Thyroid gland (tissue), 4 donors: ENCODE measurements at regions of chr7 and their contacts with region 1.

Region 1: DNA sequence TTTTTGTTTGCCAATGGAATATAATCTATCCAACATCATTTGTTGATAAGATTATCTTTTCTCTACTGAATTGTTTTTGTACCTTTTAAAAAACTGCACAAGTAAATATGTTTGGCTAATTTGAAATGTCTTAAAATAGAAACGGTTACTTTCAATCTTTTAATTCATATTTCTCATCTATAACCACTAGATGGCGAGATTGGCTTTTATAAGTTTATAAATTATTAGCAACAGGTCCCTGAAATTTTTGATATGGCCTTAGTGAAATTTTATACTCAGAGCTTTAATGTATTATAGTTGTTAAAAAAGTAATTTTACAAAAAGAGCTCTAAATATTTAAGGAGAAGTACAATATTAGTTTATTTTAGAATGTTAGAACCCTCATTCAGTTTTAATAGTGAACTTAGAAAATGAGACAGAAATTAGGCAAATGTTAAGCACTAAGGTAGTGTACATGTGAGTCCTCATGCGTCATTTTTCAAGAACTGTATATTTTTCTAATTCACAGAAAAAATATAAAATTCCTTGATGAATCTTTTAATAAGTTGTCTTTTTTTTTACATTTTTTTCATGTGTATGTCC is 592.5 kb downstream of the ARL4A start:
- DNase-seq: no peak
- H3K4me3 ChIP-seq: no peak overlapping the region
- H3K27ac ChIP-seq: no peak overlapping the region
- H3K4me1 ChIP-seq: no peaks in the 10 kb centered on the region
- H3K27me3 ChIP-seq: no peaks in the 10 kb centered on the region
- CTCF ChIP-seq: peak in 4 of 6 experiments; percentile 33 to 64 (median 54)
- POLR2A ChIP-seq: no peak

Region 2: DNA sequence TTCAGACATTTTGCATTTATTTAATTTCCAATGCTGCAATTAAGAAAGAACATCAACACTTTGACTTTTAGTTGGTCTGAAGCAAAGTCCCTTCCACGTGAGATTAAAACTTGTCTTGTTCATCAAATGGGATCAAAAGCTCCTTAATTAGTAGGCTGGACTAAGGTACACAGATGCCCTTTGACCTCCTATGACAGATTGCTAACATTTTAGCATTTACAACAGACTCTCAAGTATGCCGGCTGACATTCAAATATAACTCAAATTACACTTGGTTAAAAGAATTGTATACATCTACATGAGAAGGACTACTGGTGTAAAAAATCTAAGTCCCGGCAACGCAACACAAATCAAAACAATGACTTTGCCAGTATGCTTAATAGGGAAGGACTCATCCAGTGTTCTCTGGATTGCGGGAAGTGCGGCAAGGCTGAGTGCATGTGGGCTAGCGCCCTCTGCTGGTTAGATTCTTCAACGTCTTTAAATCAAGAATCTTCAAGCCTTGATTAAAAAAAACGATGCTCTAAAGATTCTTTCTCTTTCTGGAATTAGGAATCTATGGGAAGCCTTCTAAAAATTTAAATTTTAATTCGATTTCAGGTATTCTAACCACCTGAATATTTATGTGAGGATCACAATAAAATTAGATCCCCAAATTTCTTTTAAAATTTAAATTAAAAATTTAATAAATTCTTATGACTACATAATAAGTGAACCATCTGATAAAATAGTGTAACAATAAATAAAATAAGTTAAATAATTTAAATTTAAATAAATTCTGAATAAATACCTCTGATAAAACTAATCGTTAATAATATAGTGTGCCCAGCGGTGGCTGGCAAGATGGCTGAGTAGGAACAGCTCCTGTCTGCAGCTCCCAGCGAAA is 1177.9 kb after region 1 on chr7:
- intact Hi-C with region 1: loop called (anchors 10 kb)
- DNase-seq: peak; percentile 62 to 75
- H3K4me3 ChIP-seq: no peak overlapping the region
- H3K27ac ChIP-seq: no peak overlapping the region
- H3K4me1 ChIP-seq: no peaks in the 10 kb centered on the region
- H3K27me3 ChIP-seq: no peaks in the 10 kb centered on the region
- CTCF ChIP-seq: peak; percentile 44 to 82 (median 70)
- POLR2A ChIP-seq: no peak

Region 3: DNA sequence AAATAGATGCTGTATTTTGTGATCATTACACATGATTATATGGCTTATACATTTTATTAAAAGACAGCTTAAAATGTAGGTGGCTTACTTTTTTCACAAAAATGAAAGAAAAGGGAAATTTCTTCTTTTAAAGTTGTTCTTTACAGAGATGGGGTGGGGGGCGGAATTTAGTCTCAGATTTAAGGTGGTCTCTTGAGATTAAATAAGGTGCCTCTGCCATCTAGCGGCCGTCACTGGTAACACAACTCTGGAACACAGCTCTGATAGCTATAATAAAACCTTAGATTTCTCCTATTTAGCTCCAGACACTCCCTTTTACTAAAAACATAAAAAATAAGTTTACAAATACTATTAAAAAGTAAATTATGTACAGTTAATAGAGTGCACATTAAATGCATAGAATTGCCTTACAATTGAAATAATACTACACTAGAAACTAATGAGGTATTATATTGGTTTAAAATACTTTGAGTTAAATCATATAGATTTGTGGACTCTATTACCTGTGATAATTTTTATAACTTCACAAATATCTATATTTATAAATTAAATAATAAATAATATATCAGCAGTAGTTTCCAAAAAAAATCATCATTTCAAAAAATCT is 1411.8 kb after region 1 on chr7:
- intact Hi-C with region 1: loop called (anchors 10 kb)
- DNase-seq: peak; percentile 30 to 44
- H3K4me3 ChIP-seq: no peak overlapping the region
- H3K27ac ChIP-seq: no peak overlapping the region
- H3K4me1 ChIP-seq: no peaks in the 10 kb centered on the region
- H3K27me3 ChIP-seq: no peaks in the 10 kb centered on the region
- CTCF ChIP-seq: peak; percentile 40 to 83 (median 52)
- POLR2A ChIP-seq: no peak